Mammary epithelial cell (primary cell): ENCODE measurements at regions of chr1 and their contacts with region 1.

Region 1: GRCh38 chr1:204198151-204198994 is 2.1 kb upstream of the KISS1 start:
- DNase-seq: peak; percentile 85
- H3K4me3 ChIP-seq: no peak overlapping the region
- H3K27ac ChIP-seq: peak overlapping the region; percentile 54
- H3K4me1 ChIP-seq: peaks cover 18% of the 10 kb centered on the region
- H3K27me3 ChIP-seq: no peaks in the 10 kb centered on the region
- CTCF ChIP-seq: peak in 1 of 2 donors; percentile 54

Region 2: GRCh38 chr1:203861379-203862184 is 336.8 kb before region 1 on chr1 and contains the start of gene SNRPE:
- CTCF ChIA-PET with region 1: no interaction called
- dilution Hi-C with region 1: no loop called
- in situ Hi-C with region 1: no loop called
- intact Hi-C with region 1: loop called (anchors 1 kb)
- DNase-seq: peak; percentile 97
- H3K4me3 ChIP-seq: peak within 1 kb of the TSS; percentile 59 to 92 (median 74)
- H3K27ac ChIP-seq: peak within 1 kb of the TSS; percentile 82
- H3K4me1 ChIP-seq: peaks cover 22% of the 10 kb centered on the region
- H3K27me3 ChIP-seq: no peaks in the 10 kb centered on the region
- CTCF ChIP-seq: peak; percentile 80 to 94
- total RNA-seq, gene SNRPE: 21.7 to 131 TPM

Region 3: DNA sequence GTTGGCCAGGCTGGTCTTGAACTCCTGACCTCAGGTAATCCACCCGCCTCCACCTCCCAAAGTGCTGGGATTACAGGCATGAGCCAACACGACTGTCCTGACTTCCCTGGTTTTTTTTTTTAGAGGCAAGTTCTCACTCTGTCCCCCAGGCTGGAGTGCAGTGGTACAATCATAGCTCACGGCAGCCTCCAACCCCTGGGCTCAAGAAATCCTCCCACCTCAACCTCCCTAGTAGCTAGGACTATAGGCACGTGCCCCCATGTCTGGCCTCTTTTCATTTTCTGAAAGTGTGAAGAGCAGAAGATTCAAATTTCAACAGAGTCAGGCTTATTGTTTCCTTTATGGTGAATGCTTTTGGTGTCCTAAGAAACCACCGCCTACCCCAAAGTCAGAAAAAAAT is 147.1 kb before region 1 on chr1:
- CTCF ChIA-PET with region 1: no interaction called
- dilution Hi-C with region 1: no loop called
- in situ Hi-C with region 1: no loop called
- intact Hi-C with region 1: no loop called
- DNase-seq: no peak
- H3K4me3 ChIP-seq: no peak overlapping the region
- H3K27ac ChIP-seq: no peak overlapping the region
- H3K4me1 ChIP-seq: no peaks in the 10 kb centered on the region
- H3K27me3 ChIP-seq: no peaks in the 10 kb centered on the region
- CTCF ChIP-seq: no peak

Region 4: GRCh38 chr1:204150702-204151551 is 47.4 kb before region 1 on chr1:
- CTCF ChIA-PET with region 1: no interaction called
- dilution Hi-C with region 1: loop called (anchors 5 kb)
- in situ Hi-C with region 1: no loop called
- intact Hi-C with region 1: no loop called
- DNase-seq: no peak
- H3K4me3 ChIP-seq: peak overlapping the region; percentile 44 to 68 (median 57)
- H3K27ac ChIP-seq: no peak overlapping the region
- H3K4me1 ChIP-seq: peaks cover 18% of the 10 kb centered on the region
- H3K27me3 ChIP-seq: no peaks in the 10 kb centered on the region
- CTCF ChIP-seq: no peak

Region 5: GRCh38 chr1:204171751-204172178 is 26.6 kb before region 1 on chr1:
- CTCF ChIA-PET with region 1: no interaction called
- dilution Hi-C with region 1: no loop called
- in situ Hi-C with region 1: no loop called
- intact Hi-C with region 1: loop called (anchors 1 kb)
- DNase-seq: peak; percentile 98
- H3K4me3 ChIP-seq: no peak overlapping the region
- H3K27ac ChIP-seq: peak overlapping the region; percentile 62
- H3K4me1 ChIP-seq: peaks cover 21% of the 10 kb centered on the region
- H3K27me3 ChIP-seq: no peaks in the 10 kb centered on the region
- CTCF ChIP-seq: no peak

Region 6: DNA sequence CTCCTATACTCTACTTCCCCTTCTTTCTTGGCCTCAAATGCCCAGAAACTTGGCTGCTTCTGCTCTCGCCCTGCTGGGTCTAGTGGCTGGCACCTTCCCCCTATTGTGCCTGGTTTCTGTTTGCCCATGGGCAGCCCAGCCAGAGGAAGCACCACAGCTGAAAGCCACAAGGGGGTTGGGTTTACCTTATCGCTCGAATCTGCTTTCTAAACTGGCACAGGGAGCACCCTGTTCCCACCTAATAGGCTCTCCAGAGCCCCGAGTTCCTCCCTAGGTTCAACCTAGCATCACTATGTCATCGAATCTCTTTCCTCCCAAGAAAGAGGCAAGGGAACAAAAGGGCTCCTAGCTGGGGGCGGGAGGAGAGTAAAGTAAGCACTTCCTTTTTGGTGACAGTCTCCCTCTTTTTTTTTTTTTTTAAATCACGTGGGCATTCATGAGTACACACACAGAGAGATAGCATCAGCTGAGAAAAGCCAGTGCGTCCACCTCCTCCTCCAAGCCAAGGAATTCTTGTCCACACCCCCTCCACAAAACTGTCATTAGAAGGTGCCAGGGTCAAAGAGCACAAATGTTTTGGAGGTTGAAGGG is 88.6 kb after region 1 on chr1:
- CTCF ChIA-PET with region 1: interaction called, 16 read pairs
- dilution Hi-C with region 1: no loop called
- in situ Hi-C with region 1: no loop called
- intact Hi-C with region 1: no loop called
- DNase-seq: peak; percentile 33
- H3K4me3 ChIP-seq: peak overlapping the region; percentile 41 to 55 (median 44)
- H3K27ac ChIP-seq: peak overlapping the region; percentile 62
- H3K4me1 ChIP-seq: peaks cover 29% of the 10 kb centered on the region
- H3K27me3 ChIP-seq: no peaks in the 10 kb centered on the region
- CTCF ChIP-seq: peak in 1 of 2 donors; percentile 11